ENCODE measurements at regions of chr2 and their contacts with region 1.

Region 1: DNA sequence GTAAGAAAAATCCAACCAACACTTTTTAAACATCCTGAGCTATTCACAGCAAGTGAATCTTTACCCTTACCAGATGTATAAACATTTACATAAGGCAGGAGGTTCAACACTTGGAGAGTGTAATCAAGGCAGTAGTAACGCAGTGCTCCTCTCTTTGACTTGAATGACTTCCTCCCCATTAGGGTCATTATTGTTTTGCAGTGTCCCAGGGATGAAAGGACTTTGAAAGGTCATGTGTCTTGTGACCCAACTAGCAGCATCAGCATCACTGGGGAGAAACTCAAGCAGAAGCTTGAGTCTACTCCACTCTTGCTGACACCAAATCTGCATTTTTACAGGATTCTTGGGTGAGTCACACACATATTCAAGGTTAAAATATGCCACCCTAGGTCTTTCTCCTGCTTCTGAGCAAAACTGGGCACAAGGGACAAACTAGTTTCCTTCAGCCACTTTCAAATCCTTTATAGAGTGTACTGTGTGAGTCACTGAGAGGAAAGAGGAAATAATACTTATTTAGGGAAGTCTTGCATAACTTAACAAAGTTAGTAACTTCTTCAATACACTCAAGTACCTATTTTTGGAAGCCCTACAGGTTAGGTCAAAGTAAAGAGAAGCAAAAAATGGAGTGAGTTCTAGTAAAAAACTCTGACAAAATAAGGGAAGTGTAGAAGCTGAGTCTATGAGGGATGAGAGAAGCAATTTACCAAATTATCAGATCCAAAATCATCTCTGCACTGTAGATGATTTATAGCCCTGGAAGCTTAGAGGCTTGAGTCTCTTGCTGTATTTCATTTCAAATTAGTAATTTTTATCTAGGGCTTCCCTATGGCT is 51.0 kb upstream of the EML4 start:
- DNase-seq: no peak
- ATAC-seq: peak; percentile 94
- H3K4me3 ChIP-seq: no peak overlapping the region
- H3K4me3 Mint-ChIP-seq: peak overlapping the region in 4 of 10 donors; percentile 15 to 60 (median 50)
- H3K27ac ChIP-seq: no peak overlapping the region
- H3K27ac Mint-ChIP-seq: peak overlapping the region; percentile 38 to 90 (median 64)
- H3K4me1 ChIP-seq: peaks cover 26 to 31% of the 10 kb centered on the region in 2 donors
- H3K4me1 Mint-ChIP-seq: peaks cover 30 to 72% (median 57%) of the 10 kb centered on the region in 7 donors
- H3K27me3 ChIP-seq: no peaks in the 10 kb centered on the region
- H3K27me3 Mint-ChIP-seq: peaks cover 0 to 2% (median 0%) of the 10 kb centered on the region in 5 donors

Region 2: DNA sequence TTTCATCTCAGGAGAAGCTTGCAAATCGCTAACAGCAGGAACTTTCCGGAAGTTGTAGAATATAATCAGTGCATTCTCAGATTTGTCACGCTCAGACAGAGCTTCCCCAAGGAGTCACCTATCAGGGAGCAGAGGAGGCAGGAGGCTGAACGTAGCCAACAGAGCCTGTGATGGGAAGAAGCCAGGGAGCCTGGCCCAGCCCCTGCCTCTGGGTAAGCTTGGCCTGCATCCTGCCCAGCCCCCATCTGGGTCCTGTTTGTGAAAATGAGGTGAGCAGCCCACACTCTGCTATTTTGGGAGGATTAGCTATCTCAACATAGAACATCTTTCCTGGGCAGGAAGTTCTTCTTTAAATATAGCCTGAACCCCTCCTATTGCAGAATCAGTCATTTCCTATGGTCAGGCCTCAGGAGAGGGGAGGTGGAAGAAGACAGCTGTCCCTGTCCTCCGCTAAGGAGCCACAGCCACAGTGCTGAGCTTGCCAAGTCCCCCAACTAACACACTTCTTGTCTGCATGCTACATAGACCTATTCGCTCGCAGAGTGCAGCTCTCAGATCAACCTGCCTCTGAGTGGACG is 89.5 kb before region 1 on chr2:
- CTCF ChIA-PET with region 1: no interaction called
- POLR2A ChIA-PET with region 1: no interaction called
- intact Hi-C with region 1: no loop called
- DNase-seq: no peak
- ATAC-seq: no peak
- H3K4me3 ChIP-seq: no peak overlapping the region
- H3K4me3 Mint-ChIP-seq: no peak overlapping the region
- H3K27ac ChIP-seq: no peak overlapping the region
- H3K27ac Mint-ChIP-seq: peak overlapping the region in 1 of 9 donors; percentile 28
- H3K4me1 ChIP-seq: no peaks in the 10 kb centered on the region
- H3K4me1 Mint-ChIP-seq: peaks cover 0 to 5% (median 0%) of the 10 kb centered on the region in 7 donors
- H3K27me3 ChIP-seq: no peaks in the 10 kb centered on the region
- H3K27me3 Mint-ChIP-seq: peaks cover 13 to 40% (median 38%) of the 10 kb centered on the region in 5 donors

Region 3: DNA sequence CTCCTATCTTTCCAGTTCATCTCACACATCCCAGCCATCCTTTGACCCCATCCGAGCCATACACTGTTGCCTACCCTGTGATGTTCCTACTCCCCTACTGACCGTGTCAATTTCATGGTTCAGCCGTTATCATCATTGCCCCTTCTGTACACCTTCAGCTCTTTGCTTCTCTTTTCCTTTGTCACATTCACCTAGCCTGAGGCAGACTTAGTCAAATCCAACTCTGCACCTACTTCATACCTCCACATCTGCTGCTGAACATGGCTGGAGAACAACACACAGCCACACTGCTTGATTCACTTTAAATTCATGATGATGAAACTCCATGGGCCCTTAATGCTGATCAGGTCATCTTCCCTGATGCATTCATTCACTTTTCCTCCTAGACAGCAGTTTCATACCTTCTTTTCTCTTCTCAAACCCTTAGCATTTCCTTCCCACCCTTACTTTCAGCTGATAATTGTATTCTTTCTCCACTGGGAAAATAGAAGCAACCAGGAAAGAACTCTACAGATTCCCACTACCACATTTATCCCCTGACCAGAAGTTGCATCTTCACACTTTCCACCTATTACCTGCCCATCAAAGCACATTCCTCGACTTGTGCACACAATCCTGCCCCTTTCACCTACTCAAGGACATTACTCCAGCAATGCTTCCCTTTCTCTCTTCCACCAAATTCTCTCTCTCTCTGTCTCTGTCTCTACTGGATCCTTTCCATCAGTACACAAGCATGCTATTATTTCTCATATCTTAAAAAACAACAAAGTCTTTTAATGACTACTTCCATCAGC is 10.7 kb before region 1 on chr2:
- CTCF ChIA-PET with region 1: interaction called, 17 read pairs
- POLR2A ChIA-PET with region 1: interaction called, 636 read pairs
- intact Hi-C with region 1: loop called in 1 of 2 experiments (anchors 1 kb)
- DNase-seq: no peak
- ATAC-seq: no peak
- H3K4me3 ChIP-seq: peak overlapping the region; percentile 43
- H3K4me3 Mint-ChIP-seq: no peak overlapping the region
- H3K27ac ChIP-seq: peak overlapping the region; percentile 95
- H3K27ac Mint-ChIP-seq: no peak overlapping the region
- H3K4me1 ChIP-seq: peaks cover 78 to 90% of the 10 kb centered on the region in 2 donors
- H3K4me1 Mint-ChIP-seq: peaks cover 8 to 34% (median 12%) of the 10 kb centered on the region in 7 donors
- H3K27me3 ChIP-seq: no peaks in the 10 kb centered on the region
- H3K27me3 Mint-ChIP-seq: no peaks in the 10 kb centered on the region

Measured in naive thymus-derived CD4-positive, alpha-beta T cell (primary cell).